ENCODE measurements at regions of chr12 and their contacts with region 1.

Region 1: DNA sequence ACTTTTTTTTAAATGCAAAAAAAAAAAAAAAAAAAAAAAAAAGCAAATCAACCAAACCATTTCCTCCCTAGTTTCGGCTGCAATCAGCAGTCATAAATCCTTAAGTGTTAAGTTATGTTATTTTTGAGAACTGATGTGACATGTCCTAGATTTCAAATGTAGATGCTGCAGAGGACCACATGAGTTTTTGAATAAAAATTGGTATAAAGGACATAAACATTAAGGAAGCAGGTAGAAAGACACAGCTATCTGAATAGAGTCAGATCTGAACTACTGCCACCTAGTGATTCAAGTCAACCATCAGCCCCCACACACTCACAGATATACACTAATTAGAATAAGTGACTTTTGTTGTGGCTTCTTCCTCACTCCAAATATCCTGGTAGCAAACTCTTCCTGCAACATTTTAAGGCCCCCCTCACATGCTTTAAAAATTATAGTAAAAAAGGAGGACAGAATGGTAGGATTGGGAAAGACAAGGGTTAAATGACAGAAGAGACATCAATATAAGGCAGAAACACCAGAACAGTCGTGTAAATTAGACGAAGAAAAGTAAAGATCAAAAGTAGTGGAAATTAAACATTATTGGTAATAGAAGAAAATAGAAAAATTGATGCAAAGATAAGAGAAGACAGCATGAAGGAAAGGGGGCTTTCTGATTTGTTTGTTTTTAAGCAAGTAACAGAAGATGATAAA is 394.5 kb upstream of the ATP2B1 start:
- DNase-seq: peak in 2 of 4 donors; percentile 9 to 31
- ATAC-seq: no peak
- H3K4me3 ChIP-seq: no peak overlapping the region
- H3K27ac ChIP-seq: no peak overlapping the region
- H3K4me1 ChIP-seq: no peaks in the 10 kb centered on the region
- H3K27me3 ChIP-seq: no peaks in the 10 kb centered on the region
- CTCF ChIP-seq: peak in 6 of 7 experiments; percentile 17 to 51 (median 33)
- POLR2A ChIP-seq: no peak

Region 2: GRCh38 chr12:89542912-89543592 is 560.1 kb before region 1 on chr12:
- intact Hi-C with region 1: loop called (anchors 10 kb)
- DNase-seq: peak; percentile 74 to 83 (median 76)
- ATAC-seq: peak; percentile 83
- H3K4me3 ChIP-seq: no peak overlapping the region
- H3K27ac ChIP-seq: no peak overlapping the region
- H3K4me1 ChIP-seq: peaks cover 8% of the 10 kb centered on the region
- H3K27me3 ChIP-seq: no peaks in the 10 kb centered on the region
- CTCF ChIP-seq: peak; percentile 75 to 94 (median 86)
- POLR2A ChIP-seq: no peak

Measured in body of pancreas (tissue), 4 donors.